CD14-positive monocyte (primary cell): ENCODE measurements at regions of chrX and their contacts with region 1.

Region 1: DNA sequence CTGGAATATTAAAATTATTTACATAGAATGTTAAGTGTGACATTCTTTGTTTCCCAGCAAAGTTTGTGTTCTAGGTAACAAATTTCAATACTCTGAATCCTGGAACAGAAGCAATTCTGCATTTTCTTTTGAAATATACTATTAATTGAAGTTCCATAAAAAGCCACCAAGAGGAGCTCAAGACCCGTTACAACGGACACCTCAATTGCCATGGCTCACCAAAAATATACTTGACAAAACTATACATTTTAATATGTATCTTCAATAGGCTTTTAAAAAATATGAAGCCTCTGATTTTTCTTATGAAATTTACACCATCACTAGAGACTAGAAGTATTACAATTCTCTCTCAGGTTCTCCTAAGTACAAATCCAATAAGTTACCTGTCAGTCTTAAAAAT is 111.4 kb downstream of the NYX start:
- DNase-seq: peak in 2 of 3 donors; percentile 20 to 26
- H3K4me3 ChIP-seq: peak overlapping the region in 1 of 3 experiments; percentile 41
- H3K4me3 Mint-ChIP-seq: no peak overlapping the region
- H3K27ac ChIP-seq: peak overlapping the region in 1 of 2 donors; percentile 64
- H3K27ac Mint-ChIP-seq: peak overlapping the region in 5 of 7 donors; percentile 25 to 75 (median 72)
- H3K4me1 ChIP-seq: peaks cover 23 to 33% of the 10 kb centered on the region in 2 donors
- H3K4me1 Mint-ChIP-seq: peaks cover 19% of the 10 kb centered on the region
- H3K27me3 ChIP-seq: peaks cover 0 to 14% of the 10 kb centered on the region in 2 donors
- H3K27me3 Mint-ChIP-seq: peaks cover 0 to 4% (median 0%) of the 10 kb centered on the region in 3 donors
- CTCF ChIP-seq: peak; percentile 64

Region 2: GRCh38 chrX:41759817-41760216 is 201.3 kb after region 1 on chrX:
- intact Hi-C with region 1: loop called (anchors 10 kb)
- DNase-seq: peak; percentile 10 to 34 (median 20)
- H3K4me3 ChIP-seq: no peak overlapping the region
- H3K4me3 Mint-ChIP-seq: no peak overlapping the region
- H3K27ac ChIP-seq: no peak overlapping the region
- H3K27ac Mint-ChIP-seq: no peak overlapping the region
- H3K4me1 ChIP-seq: no peaks in the 10 kb centered on the region
- H3K4me1 Mint-ChIP-seq: no peaks in the 10 kb centered on the region
- H3K27me3 ChIP-seq: no peaks in the 10 kb centered on the region
- H3K27me3 Mint-ChIP-seq: peaks cover 0 to 1% (median 0%) of the 10 kb centered on the region in 3 donors
- CTCF ChIP-seq: peak; percentile 63